Tibial artery (tissue), 4 donors: ENCODE measurements at regions of chr15 and their contacts with region 1.

Region 1: GRCh38 chr15:101251830-101252820 is at the start of gene CHSY1:
- DNase-seq: peak; percentile 92 to 96
- H3K4me3 ChIP-seq: peak within 1 kb of the TSS; percentile 79 to 89
- H3K27ac ChIP-seq: peak within 1 kb of the TSS; percentile 80 to 82
- H3K4me1 ChIP-seq: peaks cover 0 to 45% (median 17%) of the 10 kb centered on the region in 4 donors
- H3K27me3 ChIP-seq: no peaks in the 10 kb centered on the region
- CTCF ChIP-seq: peak; percentile 8 to 10

Region 2: DNA sequence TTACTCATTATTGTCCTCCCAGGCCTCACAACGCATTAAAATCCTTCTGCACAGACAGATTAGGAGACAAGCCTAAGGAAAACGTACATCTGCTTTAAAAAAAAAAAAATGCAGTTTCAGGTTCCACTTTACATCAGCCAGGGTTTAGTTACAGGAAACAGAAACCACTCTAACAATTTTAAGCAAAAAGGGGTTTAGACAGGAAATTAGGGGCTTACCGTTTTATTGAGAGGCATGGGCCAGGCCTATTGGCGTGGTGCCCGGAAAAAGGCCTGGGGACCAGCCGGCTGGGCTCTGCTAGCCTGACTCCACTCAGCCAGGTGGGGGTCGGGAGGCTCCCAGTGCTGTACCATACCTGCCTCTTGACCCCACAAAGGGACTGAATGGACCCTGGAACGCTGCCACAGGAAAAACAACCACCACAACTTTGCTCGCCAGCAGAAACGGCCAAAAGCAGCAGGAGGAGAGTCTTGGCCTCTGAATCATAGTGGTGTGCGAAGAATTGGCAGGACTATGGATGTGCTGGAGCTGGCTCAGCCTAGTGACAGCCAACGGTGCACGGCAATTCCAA is 124.5 kb before region 1 on chr15:
- intact Hi-C with region 1: loop called (anchors 10 kb)
- DNase-seq: peak; percentile 91 to 96
- H3K4me3 ChIP-seq: no peak overlapping the region
- H3K27ac ChIP-seq: peak overlapping the region; percentile 71 to 78
- H3K4me1 ChIP-seq: peaks cover 0 to 28% (median 20%) of the 10 kb centered on the region in 4 donors
- H3K27me3 ChIP-seq: no peaks in the 10 kb centered on the region
- CTCF ChIP-seq: no peak

Region 3: GRCh38 chr15:101201406-101202174 is 50.5 kb before region 1 on chr15:
- intact Hi-C with region 1: loop called (anchors 2 kb)
- DNase-seq: peak; percentile 97 to 99
- H3K4me3 ChIP-seq: no peak overlapping the region
- H3K27ac ChIP-seq: peak overlapping the region; percentile 72 to 80
- H3K4me1 ChIP-seq: peaks cover 0 to 66% (median 27%) of the 10 kb centered on the region in 4 donors
- H3K27me3 ChIP-seq: no peaks in the 10 kb centered on the region
- CTCF ChIP-seq: no peak